WTC11 (cell line): ENCODE measurements at regions of chr21 and their contacts with region 1.

Region 1: GRCh38 chr21:42309753-42310221 is 5.4 kb downstream of the TFF3 start:
- DNase-seq: peak; percentile 85
- ATAC-seq: peak; percentile 83
- H3K4me3 Mint-ChIP-seq: peak overlapping the region; percentile 55
- H3K27ac Mint-ChIP-seq: no peak overlapping the region
- H3K4me1 Mint-ChIP-seq: peaks cover 32% of the 10 kb centered on the region
- H3K27me3 Mint-ChIP-seq: peaks cover 6% of the 10 kb centered on the region
- CTCF ChIP-seq: peak; percentile 90

Region 2: DNA sequence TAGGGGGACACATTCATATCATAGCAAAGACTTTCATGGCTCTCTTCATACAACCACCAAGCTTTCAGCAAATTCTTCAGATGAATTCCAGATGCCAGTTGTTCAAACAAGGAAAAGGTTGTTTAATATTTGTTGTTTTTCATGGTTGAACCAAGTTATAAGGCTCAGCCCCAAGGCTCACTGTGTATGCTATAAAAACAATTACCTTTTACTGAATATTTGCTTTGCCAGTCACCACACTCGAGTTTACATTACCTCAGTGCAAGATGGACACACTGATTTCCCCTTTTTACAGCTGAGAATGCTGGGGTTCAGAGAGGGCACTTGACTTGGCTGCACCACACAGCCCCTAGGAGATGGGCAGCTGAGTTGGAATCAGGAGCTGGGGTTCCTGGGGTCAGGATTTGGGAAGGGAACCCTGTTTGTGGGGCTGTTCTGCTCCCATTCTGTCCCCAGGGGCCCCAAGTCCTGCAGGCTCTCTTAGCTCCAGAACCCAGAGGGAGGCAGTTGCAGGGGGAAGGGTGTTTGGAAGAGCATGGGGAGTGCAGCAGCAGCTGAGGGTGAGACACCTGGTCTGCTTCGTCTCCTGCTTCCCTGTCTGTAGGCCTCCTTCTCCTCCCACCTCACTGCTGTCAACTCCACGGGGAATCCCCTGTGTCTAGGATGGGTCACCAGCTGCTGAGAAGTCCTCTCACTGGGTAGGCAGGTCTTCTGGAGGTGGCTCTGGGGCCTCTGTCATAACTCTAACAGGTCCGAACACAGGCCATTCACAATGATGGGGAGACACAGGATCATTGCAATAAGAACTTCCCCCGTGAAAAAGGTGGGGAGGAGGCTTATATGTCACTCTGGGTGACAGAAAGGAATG is 789.0 kb before region 1 on chr21:
- CTCF ChIA-PET with region 1: no interaction called
- POLR2A ChIA-PET with region 1: no interaction called
- DNase-seq: no peak
- ATAC-seq: no peak
- H3K4me3 Mint-ChIP-seq: no peak overlapping the region
- H3K27ac Mint-ChIP-seq: no peak overlapping the region
- H3K4me1 Mint-ChIP-seq: no peaks in the 10 kb centered on the region
- H3K27me3 Mint-ChIP-seq: no peaks in the 10 kb centered on the region
- CTCF ChIP-seq: no peak

Region 3: GRCh38 chr21:42258153-42258884 is 51.5 kb before region 1 on chr21:
- CTCF ChIA-PET with region 1: interaction called, 35 read pairs
- POLR2A ChIA-PET with region 1: no interaction called
- DNase-seq: peak; percentile 86
- ATAC-seq: peak; percentile 87
- H3K4me3 Mint-ChIP-seq: no peak overlapping the region
- H3K27ac Mint-ChIP-seq: no peak overlapping the region
- H3K4me1 Mint-ChIP-seq: peaks cover 14% of the 10 kb centered on the region; the same call in 1 of the 2 replicates
- H3K27me3 Mint-ChIP-seq: no peaks in the 10 kb centered on the region
- CTCF ChIP-seq: peak; percentile 85

Region 4: DNA sequence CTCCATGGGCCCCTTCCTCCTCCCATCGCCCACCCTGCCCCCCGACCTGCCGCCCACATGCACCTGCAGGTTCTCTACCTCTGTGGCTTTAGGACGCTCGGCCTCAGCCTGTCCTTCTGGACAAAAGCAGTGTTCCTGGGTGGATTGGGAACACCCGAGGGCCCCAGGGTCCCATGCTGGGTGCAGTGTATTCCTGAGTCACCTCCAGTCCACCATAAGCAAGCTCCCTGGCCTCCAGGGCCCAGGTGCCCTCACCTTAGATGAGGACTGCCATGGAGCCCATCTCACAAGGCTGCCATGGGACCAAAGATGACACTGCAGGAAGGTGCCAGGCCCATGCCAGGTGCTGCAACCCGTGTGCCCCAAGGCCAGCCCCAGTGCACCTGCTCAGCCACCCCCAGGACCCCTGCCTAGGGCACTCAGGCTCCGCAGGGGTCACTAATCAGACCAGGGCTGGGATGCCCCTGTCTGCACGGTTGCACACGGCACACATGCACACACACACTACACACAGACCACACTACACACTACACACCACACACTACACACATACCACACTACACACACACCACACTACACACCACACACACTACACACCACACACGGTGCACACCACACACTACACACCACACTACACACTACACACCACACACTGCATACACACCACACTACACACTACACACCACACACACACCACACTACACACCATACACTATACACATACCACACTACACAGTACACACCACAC is 17.5 kb before region 1 on chr21:
- CTCF ChIA-PET with region 1: interaction called, 32 read pairs
- POLR2A ChIA-PET with region 1: no interaction called
- DNase-seq: peak; percentile 8
- ATAC-seq: no peak
- H3K4me3 Mint-ChIP-seq: no peak overlapping the region
- H3K27ac Mint-ChIP-seq: no peak overlapping the region
- H3K4me1 Mint-ChIP-seq: no peaks in the 10 kb centered on the region
- H3K27me3 Mint-ChIP-seq: no peaks in the 10 kb centered on the region
- CTCF ChIP-seq: no peak

Region 5: GRCh38 chr21:42373196-42373907 is 63.6 kb after region 1 on chr21:
- CTCF ChIA-PET with region 1: interaction called, 19 read pairs
- POLR2A ChIA-PET with region 1: no interaction called
- DNase-seq: no peak
- ATAC-seq: no peak
- H3K4me3 Mint-ChIP-seq: no peak overlapping the region
- H3K27ac Mint-ChIP-seq: no peak overlapping the region
- H3K4me1 Mint-ChIP-seq: peaks cover 12% of the 10 kb centered on the region
- H3K27me3 Mint-ChIP-seq: no peaks in the 10 kb centered on the region; the same call in 1 of the 2 replicates
- CTCF ChIP-seq: no peak

Region 6: GRCh38 chr21:42411191-42411869 is 101.5 kb after region 1 on chr21:
- CTCF ChIA-PET with region 1: interaction called, 17 read pairs
- POLR2A ChIA-PET with region 1: no interaction called
- DNase-seq: peak; percentile 47
- ATAC-seq: peak; percentile 88
- H3K4me3 Mint-ChIP-seq: no peak overlapping the region
- H3K27ac Mint-ChIP-seq: no peak overlapping the region
- H3K4me1 Mint-ChIP-seq: 0 out of 2 replicates have a peak, but pooled peaks cover 2% of the 10 kb centered on the region
- H3K27me3 Mint-ChIP-seq: no peaks in the 10 kb centered on the region
- CTCF ChIP-seq: no peak

Region 7: DNA sequence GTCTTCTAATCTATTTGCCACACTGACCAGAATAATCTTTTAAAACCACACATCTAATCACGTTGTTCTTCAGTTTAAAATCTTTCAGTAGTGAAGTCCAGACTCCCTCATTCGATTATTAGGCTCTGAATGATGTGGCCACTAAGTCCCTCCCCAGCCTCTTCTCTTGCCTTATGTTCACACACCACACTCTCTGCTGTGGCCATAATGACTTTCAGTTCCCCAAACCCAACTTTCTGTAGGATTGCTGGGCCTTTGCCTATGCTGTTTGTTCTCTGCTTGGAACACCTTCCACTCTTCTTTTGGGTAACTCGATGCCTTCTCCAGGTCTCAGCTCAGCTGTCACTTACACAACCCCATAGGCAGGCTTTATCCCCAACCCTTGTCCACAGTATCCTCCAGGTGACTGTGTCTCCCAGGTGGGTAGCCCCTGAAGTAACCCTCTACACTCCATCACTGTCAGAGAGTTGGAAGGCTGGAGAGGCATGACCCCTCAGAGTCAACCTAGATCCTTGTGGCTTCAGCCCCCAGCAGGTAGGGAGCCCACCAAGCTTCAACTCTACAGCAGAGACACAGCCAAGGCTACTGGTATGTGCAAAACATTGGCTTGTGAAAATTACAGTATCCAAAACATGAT is 195.4 kb after region 1 on chr21:
- CTCF ChIA-PET with region 1: no interaction called
- POLR2A ChIA-PET with region 1: no interaction called
- DNase-seq: no peak
- ATAC-seq: no peak
- H3K4me3 Mint-ChIP-seq: no peak overlapping the region
- H3K27ac Mint-ChIP-seq: no peak overlapping the region
- H3K4me1 Mint-ChIP-seq: no peaks in the 10 kb centered on the region
- H3K27me3 Mint-ChIP-seq: peaks cover 10% of the 10 kb centered on the region; the same call in 1 of the 2 replicates
- CTCF ChIP-seq: no peak

Region 8: GRCh38 chr21:42566031-42566862 is 256.5 kb after region 1 on chr21:
- CTCF ChIA-PET with region 1: interaction called, 10 read pairs
- POLR2A ChIA-PET with region 1: no interaction called
- DNase-seq: peak; percentile 10
- ATAC-seq: no peak; the same call in 1 of the 2 replicates
- H3K4me3 Mint-ChIP-seq: no peak overlapping the region
- H3K27ac Mint-ChIP-seq: no peak overlapping the region; the same call in 1 of the 2 replicates
- H3K4me1 Mint-ChIP-seq: peaks cover 4% of the 10 kb centered on the region
- H3K27me3 Mint-ChIP-seq: no peaks in the 10 kb centered on the region
- CTCF ChIP-seq: no peak

Region 9: DNA sequence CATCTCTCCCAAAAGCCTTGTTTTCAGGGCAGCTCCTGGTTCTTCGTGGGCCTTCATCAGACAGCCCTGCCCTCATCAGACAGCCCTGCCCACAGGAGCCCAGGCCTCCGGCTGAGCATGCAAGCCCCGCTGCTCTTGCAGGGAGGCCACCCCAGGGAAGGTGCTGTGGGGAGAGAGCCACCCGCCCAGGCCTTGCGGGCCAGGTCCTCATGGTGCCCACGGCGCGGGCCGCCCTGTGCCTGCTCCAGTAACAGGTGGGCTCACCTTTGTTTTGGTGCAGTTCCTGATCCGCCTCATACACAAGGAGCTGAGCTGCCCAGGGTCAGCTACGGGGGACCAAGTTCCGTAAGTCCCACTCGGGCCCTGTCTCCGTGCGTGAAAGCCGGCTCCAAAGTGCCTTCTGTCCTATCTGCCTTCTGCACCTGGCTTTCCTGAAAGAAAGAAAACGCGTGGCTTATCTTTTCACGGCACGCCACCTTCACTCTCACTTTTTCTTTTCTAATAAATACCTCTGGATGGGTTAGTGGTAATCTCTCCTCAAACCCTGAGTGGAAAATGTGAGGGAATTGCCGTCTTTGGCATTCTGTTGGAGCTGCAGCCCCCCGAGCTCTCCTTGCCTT is 269.8 kb after region 1 on chr21:
- CTCF ChIA-PET with region 1: no interaction called
- POLR2A ChIA-PET with region 1: no interaction called
- DNase-seq: no peak
- ATAC-seq: no peak
- H3K4me3 Mint-ChIP-seq: no peak overlapping the region
- H3K27ac Mint-ChIP-seq: no peak overlapping the region
- H3K4me1 Mint-ChIP-seq: no peaks in the 10 kb centered on the region
- H3K27me3 Mint-ChIP-seq: no peaks in the 10 kb centered on the region
- CTCF ChIP-seq: no peak